HEK293 (cell line): ENCODE measurements at regions of chr1 and their contacts with region 1.

Region 1: GRCh38 chr1:160006312-160006940 is 25.4 kb downstream of the PIGM start:
- H3K4me3 ChIP-seq: no peak overlapping the region
- H3K27ac ChIP-seq: no peak overlapping the region
- H3K4me1 ChIP-seq: no peaks in the 10 kb centered on the region
- CTCF ChIP-seq: peak; percentile 73

Region 2: DNA sequence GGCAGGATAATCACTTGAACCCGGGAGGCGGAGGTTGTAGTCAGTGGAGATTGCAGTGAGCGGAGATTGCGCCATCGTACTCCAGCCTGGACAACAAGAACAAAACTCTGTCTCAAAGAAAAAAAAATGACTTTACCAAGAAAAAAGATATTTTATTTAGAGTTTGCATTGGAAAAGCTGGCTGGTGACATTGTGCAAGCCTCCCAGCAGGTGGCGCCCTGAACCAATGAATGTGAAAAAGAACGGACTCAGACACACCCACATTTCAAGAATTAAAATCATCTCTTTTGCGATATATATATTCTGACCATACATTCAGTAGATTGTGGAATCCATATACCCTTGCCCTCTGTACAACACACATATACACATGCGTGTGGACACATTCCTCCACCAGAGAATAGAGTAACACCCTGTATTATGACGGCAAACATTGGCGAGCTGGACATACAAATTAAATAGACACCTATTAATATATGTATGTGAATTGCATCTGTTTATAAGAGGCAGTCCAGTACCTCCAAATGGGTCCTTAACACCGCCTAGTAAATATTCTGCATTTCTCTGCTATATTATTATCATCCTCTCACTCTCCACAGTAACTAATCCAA is 874.0 kb before region 1 on chr1:
- CTCF ChIA-PET with region 1: interaction called, 10 read pairs
- POLR2A ChIA-PET with region 1: no interaction called
- H3K4me3 ChIP-seq: no peak overlapping the region
- H3K27ac ChIP-seq: no peak overlapping the region
- H3K4me1 ChIP-seq: no peaks in the 10 kb centered on the region
- CTCF ChIP-seq: no peak

Region 3: GRCh38 chr1:159829273-159829634 is 177.2 kb before region 1 on chr1:
- CTCF ChIA-PET with region 1: interaction called, 13 read pairs
- POLR2A ChIA-PET with region 1: no interaction called
- H3K4me3 ChIP-seq: no peak overlapping the region
- H3K27ac ChIP-seq: no peak overlapping the region
- H3K4me1 ChIP-seq: no peaks in the 10 kb centered on the region
- CTCF ChIP-seq: peak; percentile 68

Region 4: GRCh38 chr1:159908031-159908940 is 98.1 kb before region 1 on chr1:
- CTCF ChIA-PET with region 1: interaction called, 18 read pairs
- POLR2A ChIA-PET with region 1: no interaction called
- H3K4me3 ChIP-seq: no peak overlapping the region
- H3K27ac ChIP-seq: no peak overlapping the region
- H3K4me1 ChIP-seq: peaks cover 6% of the 10 kb centered on the region; the same call in 1 of the 2 replicates
- CTCF ChIP-seq: no peak

Region 5: DNA sequence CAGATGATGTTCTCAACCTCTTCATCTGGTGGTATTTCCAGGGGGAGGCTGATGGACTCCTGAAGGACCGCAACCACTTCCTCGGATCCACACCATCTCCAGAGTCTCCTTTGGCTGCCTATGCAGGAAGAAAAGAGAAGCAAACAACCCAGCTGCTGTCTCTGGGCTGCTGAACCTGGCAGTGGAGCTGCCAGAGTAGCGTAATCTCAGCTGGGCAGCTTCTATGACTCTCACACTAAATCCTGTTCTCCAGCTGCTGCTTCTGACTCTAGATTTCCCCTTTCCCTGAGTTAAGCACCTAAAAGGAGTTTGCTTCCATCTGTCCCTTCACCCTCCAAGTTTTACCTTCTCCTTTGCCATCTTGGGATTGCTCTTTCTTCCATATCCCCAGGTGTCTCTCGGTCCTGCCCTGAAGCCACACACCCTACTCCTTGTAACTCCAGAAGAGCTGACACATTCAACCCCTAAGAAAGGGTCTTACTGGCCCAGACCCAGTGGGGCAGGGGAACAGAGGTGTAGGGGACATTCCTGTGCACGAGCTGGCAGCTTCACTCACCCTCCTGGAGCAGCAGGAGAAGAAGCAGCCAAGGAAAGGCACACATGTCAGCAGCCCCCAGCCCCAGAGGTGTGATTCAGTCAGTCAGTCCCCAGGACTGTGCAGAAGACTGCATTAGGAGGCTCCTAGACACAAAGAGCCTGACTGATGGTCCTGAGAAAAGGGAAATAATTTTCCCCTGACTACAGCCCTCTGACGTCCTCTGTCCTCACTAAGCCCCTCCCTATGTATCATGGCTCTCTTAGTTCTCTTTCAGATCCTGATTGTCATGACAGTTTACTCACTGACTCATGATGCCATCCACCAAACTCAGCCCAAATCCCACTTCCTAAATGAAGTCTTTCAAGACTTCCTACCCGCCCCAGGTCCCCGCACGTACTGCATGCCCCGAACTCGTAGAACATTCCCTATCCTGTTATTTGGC is 52.6 kb before region 1 on chr1 and contains the start of gene SLAMF9:
- CTCF ChIA-PET with region 1: interaction called, 87 read pairs
- POLR2A ChIA-PET with region 1: no interaction called
- H3K4me3 ChIP-seq: no peak within 1 kb of the TSS
- H3K27ac ChIP-seq: no peak within 1 kb of the TSS
- H3K4me1 ChIP-seq: no peaks in the 10 kb centered on the region
- CTCF ChIP-seq: no peak

Region 6: DNA sequence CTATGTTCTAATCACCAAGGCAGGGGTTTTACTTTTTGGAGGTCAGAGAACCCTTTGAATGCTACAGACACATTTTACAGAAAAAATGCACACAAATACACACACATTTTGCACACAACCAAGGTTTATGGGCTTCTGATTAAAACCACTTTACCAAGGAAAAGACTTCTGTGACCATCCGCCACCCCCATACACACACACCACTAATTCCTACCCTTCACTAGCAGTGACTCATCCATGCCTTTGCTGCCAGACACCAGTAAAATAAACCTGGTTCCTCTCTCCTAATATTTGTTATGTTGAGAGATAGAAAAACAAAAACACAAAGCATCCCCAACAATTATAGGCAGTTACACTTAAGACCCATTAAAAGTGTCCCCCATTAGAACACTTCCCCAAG is 12.5 kb after region 1 on chr1:
- CTCF ChIA-PET with region 1: interaction called, 33 read pairs
- POLR2A ChIA-PET with region 1: no interaction called
- H3K4me3 ChIP-seq: no peak overlapping the region
- H3K27ac ChIP-seq: no peak overlapping the region
- H3K4me1 ChIP-seq: peaks cover 15% of the 10 kb centered on the region
- CTCF ChIP-seq: no peak

Region 7: DNA sequence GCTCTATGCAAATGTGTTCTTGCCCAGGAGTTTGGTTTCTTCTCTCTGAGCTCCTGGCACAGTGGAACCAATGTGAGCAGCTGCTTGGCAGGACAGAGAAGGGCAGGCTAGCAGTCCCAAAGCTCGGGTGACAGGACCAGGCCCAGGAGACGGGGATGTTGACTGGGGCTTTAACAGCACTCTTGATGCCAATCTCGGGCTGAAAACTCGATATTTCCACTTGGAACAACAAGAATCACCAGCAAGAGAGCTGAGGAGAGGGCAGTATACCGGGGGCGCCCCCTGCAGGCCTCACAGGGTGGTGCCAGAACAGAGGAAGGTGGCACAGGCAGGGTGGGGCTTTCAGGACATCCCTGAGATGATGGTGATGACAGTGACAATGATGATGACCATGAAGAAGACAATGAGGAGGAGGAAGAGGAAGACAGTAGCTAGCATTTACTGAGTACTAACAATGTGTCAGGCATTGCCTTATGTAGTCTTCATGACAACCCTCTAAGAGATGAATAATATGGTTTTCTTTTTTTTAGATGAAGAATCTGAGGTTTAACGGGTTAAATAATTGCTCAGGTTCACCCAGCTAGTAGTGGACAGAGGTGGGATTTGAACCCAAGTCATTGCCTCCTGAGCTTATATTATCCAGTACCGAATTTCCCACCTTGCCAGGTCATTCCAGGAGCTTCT is 72.2 kb after region 1 on chr1:
- CTCF ChIA-PET with region 1: interaction called, 54 read pairs
- POLR2A ChIA-PET with region 1: no interaction called
- H3K4me3 ChIP-seq: no peak overlapping the region
- H3K27ac ChIP-seq: no peak overlapping the region
- H3K4me1 ChIP-seq: no peaks in the 10 kb centered on the region
- CTCF ChIP-seq: peak; percentile 76

Region 8: GRCh38 chr1:160091673-160092223 is 85.3 kb after region 1 on chr1:
- CTCF ChIA-PET with region 1: no interaction called
- POLR2A ChIA-PET with region 1: no interaction called
- H3K4me3 ChIP-seq: no peak overlapping the region
- H3K27ac ChIP-seq: no peak overlapping the region
- H3K4me1 ChIP-seq: no peaks in the 10 kb centered on the region
- CTCF ChIP-seq: no peak

Region 9: DNA sequence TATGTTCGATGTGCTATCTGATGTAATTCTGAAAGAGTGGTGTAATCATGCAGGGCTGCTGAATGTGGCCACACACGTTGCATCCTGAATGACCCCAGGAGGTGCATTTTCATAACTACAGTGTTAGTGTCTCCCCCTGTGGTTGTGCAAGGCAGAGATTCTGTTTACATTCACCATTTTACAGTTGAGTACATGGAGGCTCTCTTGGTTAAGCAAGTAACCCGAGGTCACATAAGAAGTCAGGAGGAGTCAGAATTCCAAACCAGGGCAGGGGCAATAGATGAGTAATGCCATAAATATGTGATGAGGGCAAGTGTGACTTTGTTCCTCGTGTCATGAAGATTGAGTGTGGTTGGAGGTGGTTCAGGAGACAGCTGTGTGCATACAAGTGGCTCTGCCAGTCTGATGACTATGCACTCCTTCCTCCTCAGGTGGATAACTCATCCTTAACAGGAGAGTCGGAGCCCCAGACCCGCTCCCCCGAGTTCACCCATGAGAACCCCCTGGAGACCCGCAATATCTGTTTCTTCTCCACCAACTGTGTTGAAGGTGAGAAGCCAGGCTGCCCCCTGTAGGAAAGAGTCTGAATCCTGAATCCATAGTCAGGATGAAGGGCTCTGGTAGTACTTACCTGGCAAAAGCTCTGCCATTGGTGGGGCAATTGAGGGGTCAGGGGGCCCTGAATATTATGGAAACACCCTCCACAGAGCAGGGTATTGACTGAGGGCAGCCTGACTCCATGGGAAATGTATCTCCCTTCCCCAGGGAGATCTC is 118.5 kb after region 1 on chr1:
- CTCF ChIA-PET with region 1: no interaction called
- POLR2A ChIA-PET with region 1: no interaction called
- H3K4me3 ChIP-seq: no peak overlapping the region
- H3K27ac ChIP-seq: no peak overlapping the region
- H3K4me1 ChIP-seq: no peaks in the 10 kb centered on the region
- CTCF ChIP-seq: no peak